ENCODE measurements at regions of chr19 and their contacts with region 1.

Region 1: DNA sequence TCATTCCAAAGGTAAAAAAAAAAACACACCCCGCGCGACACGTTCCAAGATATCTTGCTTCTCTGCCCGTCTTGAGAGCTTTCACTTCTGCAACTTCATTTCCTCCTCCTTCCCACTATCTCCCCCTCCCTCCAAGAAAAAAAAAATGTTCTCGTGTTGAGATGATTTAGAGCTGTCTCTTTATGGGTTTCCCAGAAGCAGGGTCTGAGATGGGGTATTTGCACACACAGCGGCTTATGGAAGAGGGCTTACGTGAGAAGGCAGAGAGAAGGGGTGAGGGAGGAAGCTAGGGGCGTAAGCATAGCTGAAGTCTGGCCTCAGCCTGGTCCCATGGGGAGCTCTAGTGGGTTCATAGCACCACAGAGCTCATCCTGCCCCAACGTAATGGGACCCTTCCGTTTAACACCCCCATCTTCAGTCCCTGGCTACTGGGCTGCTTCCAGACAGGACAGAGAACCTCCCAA is 31.3 kb upstream of the USE1 start:
- DNase-seq: no peak
- H3K4me3 ChIP-seq: no peak overlapping the region
- H3K27ac ChIP-seq: no peak overlapping the region
- H3K4me1 ChIP-seq: no peaks in the 10 kb centered on the region
- H3K27me3 ChIP-seq: no peaks in the 10 kb centered on the region
- CTCF ChIP-seq: no peak

Region 2: DNA sequence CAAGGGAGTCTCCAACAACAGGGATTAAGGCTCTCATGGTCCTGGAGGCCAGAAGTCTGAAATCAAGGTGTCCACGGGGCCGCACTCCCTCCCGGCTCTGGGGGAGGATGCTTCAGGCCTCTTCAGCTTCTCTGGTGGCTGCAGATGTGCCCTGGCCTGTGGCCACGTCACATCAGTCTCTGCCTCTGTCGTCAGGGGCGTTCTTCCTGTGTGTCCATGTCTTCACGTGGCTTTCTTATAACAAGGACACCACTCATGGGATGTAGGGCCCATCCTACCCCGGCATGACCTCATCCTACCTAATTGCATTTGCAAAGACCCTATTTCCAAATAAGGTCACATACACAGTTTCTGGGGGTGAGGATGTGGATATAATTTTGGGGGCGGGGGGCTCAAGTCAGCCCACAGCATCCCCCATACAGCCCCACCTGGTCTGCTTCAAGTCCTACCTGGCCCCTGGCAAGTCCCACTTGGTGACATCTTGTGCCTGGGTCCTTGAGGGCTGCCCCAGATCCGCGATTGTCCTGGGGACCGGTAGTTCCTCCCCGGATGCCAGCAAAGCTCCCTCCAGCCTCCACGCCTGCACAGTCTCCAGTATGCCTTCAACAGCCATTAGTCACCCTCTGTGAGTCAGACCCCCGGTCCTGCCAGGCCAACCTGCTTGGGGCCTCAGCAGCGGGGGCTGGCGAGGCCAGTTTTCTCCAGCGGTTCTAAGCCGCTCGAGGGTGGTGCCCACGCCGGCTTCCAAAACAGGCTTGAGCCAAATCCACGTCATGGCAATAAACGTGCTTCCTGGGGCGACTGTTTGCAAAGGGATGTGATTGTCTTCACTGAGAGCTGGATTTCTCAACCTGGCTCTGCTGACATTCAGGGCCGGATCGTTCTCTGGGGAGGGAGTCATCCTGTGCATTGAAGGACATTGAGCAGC is 76.1 kb before region 1 on chr19:
- CTCF ChIA-PET with region 1: no interaction called
- dilution Hi-C with region 1: loop called (anchors 5 kb)
- in situ Hi-C with region 1: no loop called
- intact Hi-C with region 1: no loop called
- DNase-seq: peak; percentile 98
- H3K4me3 ChIP-seq: no peak overlapping the region
- H3K27ac ChIP-seq: peak overlapping the region; percentile 76
- H3K4me1 ChIP-seq: peaks cover 24% of the 10 kb centered on the region
- H3K27me3 ChIP-seq: no peaks in the 10 kb centered on the region
- CTCF ChIP-seq: no peak

Region 3: GRCh38 chr19:17159466-17160393 is 24.2 kb before region 1 on chr19:
- CTCF ChIA-PET with region 1: interaction called, 10 read pairs
- dilution Hi-C with region 1: no loop called
- in situ Hi-C with region 1: no loop called
- intact Hi-C with region 1: no loop called
- DNase-seq: peak; percentile 16
- H3K4me3 ChIP-seq: no peak overlapping the region
- H3K27ac ChIP-seq: no peak overlapping the region
- H3K4me1 ChIP-seq: no peaks in the 10 kb centered on the region
- H3K27me3 ChIP-seq: no peaks in the 10 kb centered on the region
- CTCF ChIP-seq: no peak

Measured in mammary epithelial cell (primary cell).